Gastrocnemius medialis (tissue), 4 donors: ENCODE measurements at regions of chr10 and their contacts with region 1.

Region 1: DNA sequence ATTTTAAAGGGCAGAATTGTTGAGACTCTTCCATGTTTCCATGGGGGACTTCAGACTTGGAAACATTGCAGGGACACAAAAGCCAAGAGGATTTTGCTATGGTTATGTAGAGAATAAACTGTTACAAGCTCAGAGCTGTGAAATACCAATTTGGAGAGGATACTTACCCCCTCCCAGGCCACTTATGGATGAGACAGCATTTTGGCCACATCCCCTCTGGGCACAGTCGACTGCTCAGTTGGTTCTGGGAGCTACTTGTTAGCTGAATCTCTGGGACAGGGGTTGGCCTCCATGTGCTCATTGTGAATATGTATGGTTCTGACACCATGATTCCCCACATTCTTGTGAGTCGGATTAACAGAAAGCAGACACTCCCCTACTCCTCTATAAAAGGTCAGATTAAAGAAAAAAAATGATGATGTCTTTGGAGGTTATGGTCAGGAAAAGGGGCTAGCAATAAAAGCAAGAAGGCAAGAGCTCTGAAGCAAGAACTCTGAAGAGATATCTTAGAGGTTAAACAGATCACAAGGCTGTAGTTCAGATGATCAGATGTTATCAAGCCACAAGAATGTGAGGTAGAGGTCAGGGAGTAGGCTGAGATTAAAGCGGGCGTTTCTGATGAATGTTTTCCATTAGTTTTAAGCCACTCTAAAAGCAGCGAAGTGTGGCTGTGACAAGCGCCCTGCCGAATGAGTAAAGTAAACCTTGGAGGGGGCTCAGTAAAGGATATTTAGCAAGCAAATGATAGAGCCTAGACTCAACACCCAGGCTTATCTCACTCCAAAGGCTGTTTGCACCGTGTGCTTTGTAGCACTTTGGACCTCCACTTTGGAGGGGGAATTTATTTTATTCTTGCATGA is 17.2 kb downstream of the STAMBPL1 start:
- DNase-seq: no peak
- ATAC-seq: peak in 1 of 2 donors; percentile 24
- H3K4me3 ChIP-seq: no peak overlapping the region
- H3K27ac ChIP-seq: peak overlapping the region; percentile 37 to 59 (median 44)
- H3K4me1 ChIP-seq: peaks cover 0 to 4% of the 10 kb centered on the region in 2 donors
- H3K27me3 ChIP-seq: no peaks in the 10 kb centered on the region
- CTCF ChIP-seq: no peak
- POLR2A ChIP-seq: no peak

Region 2: GRCh38 chr10:88913127-88913526 is 15.9 kb after region 1 on chr10:
- in situ Hi-C with region 1: no loop called
- intact Hi-C with region 1: loop called (anchors 2 kb)
- DNase-seq: peak in 1 of 2 donors; percentile 21
- ATAC-seq: peak; percentile 69 to 78
- H3K4me3 ChIP-seq: no peak overlapping the region
- H3K27ac ChIP-seq: peak overlapping the region; percentile 32 to 50 (median 47)
- H3K4me1 ChIP-seq: no peaks in the 10 kb centered on the region
- H3K27me3 ChIP-seq: no peaks in the 10 kb centered on the region
- CTCF ChIP-seq: no peak
- POLR2A ChIP-seq: no peak